Activated naive CD4-positive, alpha-beta T cell treated with anti-CD3 and anti-CD28 coated beads for 36 hours (primary cell): ENCODE measurements at regions of chr17 and their contacts with region 1.

Region 1: DNA sequence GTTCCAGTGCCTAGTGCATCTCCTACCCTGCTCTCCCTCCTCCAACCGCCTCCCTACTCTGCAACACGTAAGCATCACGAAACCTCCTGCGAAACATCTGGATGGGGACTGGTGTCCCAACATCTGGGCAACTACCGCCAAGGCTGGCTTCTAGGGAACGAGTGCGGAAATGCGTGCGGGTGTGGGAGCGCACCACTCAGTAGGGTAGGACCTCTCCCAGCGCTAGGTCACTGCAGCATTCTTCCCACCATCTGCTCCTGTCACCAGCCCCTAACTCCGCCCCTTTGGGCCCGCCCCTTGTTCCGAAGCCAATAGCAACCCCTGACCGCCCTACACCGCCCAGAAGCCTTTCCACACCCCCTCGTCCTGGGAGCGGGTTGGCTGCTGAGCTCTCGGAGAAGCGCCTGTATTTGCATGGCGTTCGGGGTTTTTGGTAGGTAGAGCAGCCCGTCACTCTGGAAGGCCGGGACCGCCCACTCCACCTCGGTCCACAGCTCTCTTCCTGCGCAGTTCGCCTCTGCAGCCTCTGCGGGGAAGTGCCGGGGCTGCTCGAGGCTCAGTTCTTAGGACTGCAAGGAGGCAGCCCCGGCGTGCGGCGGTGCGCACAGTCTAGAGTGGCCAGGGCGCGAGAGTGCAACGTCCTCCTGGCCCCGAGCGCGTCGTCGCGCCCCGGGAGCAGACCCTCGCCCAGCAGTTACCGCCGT is at the start of gene HS3ST3B1:
- DNase-seq: peak; percentile 100
- H3K4me3 Mint-ChIP-seq: peak within 1 kb of the TSS; percentile 89
- H3K27ac Mint-ChIP-seq: peak within 1 kb of the TSS; percentile 95
- H3K4me1 Mint-ChIP-seq: peaks cover 38% of the 10 kb centered on the region
- H3K27me3 Mint-ChIP-seq: peaks cover 30% of the 10 kb centered on the region
- total RNA-seq, gene HS3ST3B1: 23.2 to 26.0 TPM

Region 2: DNA sequence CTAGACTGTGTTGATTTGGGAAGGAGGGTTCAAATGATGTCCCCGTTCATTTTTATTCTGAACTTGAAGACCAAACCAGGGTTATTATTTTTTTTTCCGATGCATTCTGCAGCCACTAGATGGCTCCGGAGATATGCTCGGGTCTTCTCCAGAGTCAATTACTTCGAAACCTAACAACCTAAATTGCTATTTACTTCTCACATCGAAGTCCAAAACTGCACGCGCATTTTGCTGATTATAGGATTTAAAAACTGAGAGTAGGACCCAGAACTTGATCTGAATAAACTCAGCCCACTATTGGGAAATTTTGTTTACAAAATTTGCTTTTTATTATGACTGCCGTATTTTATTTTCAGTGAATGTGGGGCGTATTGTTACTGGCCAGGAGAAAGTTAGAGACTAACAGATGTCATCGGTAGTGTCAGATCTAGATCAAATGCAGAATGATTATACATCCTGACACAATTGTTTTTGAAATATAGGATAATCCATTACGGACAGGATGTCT is 962.8 kb before region 1 on chr17:
- CTCF ChIA-PET with region 1: no interaction called
- intact Hi-C with region 1: loop called (anchors 5 kb)
- DNase-seq: peak; percentile 43
- H3K4me3 Mint-ChIP-seq: peak overlapping the region; percentile 8
- H3K27ac Mint-ChIP-seq: no peak overlapping the region
- H3K4me1 Mint-ChIP-seq: peaks cover 6% of the 10 kb centered on the region
- H3K27me3 Mint-ChIP-seq: peaks cover 34% of the 10 kb centered on the region

Region 3: DNA sequence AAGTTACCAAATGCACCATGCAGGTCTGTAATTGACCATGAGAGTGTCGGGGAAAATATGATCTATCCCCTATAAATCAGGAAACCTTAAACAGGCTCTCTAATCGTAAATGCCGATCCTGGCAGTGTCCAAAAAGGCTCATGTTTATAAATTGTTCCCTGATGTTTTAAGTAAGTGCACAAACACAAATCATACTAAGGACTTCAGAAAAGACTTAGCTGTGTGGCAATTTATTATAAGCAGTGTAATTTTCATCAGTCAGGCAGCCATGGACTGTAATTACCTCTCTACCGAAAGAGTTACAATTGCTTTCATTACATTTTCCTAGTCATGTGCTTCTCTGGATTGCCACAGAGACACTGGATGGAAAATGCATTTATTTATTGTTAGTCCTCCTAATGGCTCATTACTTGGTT is 304.9 kb before region 1 on chr17:
- CTCF ChIA-PET with region 1: no interaction called
- intact Hi-C with region 1: loop called (anchors 5 kb)
- DNase-seq: no peak
- H3K4me3 Mint-ChIP-seq: no peak overlapping the region
- H3K27ac Mint-ChIP-seq: no peak overlapping the region
- H3K4me1 Mint-ChIP-seq: no peaks in the 10 kb centered on the region
- H3K27me3 Mint-ChIP-seq: no peaks in the 10 kb centered on the region

Region 4: GRCh38 chr17:14118951-14119350 is 181.8 kb before region 1 on chr17:
- CTCF ChIA-PET with region 1: interaction called, 3 read pairs
- intact Hi-C with region 1: loop called (anchors 1 kb)
- DNase-seq: peak; percentile 37
- H3K4me3 Mint-ChIP-seq: no peak overlapping the region
- H3K27ac Mint-ChIP-seq: peak overlapping the region; percentile 96
- H3K4me1 Mint-ChIP-seq: peaks cover 88% of the 10 kb centered on the region
- H3K27me3 Mint-ChIP-seq: no peaks in the 10 kb centered on the region

Region 5: DNA sequence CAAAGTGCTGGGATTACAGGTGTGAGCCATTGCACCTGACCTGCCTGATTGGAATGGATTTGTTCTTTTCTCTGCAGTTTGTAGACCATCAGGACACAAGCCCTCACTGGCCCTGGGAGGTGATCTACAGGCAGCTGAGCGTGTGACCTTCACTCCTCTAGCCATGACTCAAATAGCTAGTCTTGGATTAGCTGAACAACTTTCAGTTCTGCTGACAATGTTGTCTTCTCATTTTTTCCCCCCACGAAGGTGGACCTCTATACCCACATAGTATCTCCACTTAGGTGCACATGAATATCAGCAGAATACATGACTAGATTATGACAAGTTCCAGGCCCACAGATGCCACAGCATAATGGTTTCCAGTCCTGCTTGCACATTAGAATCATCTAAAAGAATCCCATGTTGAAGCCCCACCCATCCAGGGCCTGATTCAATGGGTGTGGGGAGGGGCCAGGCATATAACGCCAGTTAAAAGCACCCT is 36.9 kb after region 1 on chr17:
- CTCF ChIA-PET with region 1: no interaction called
- intact Hi-C with region 1: loop called (anchors 1 kb)
- DNase-seq: peak; percentile 77
- H3K4me3 Mint-ChIP-seq: no peak overlapping the region
- H3K27ac Mint-ChIP-seq: peak overlapping the region; percentile 46
- H3K4me1 Mint-ChIP-seq: peaks cover 79% of the 10 kb centered on the region
- H3K27me3 Mint-ChIP-seq: no peaks in the 10 kb centered on the region

Region 6: DNA sequence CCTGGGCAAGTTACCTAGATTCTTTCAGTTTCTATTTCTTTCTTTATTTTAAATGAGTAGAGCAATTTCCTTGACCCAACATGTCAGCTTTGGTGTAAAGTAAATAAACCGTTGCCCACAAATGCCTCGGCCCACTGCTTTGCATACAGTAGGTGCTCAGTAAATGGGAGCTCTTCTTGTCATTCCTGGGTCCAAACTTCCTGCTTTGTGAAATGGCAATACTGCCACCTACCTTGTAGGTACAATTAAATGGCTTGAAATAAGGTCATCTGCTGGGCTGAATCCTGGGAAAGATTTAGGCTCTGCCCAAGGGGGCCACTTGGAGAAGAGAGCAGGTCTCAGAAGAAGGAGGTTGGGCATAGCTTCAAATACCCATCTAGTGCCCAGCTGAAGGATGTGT is 253.1 kb after region 1 on chr17:
- CTCF ChIA-PET with region 1: no interaction called
- intact Hi-C with region 1: loop called (anchors 5 kb)
- DNase-seq: no peak
- H3K4me3 Mint-ChIP-seq: no peak overlapping the region
- H3K27ac Mint-ChIP-seq: no peak overlapping the region
- H3K4me1 Mint-ChIP-seq: no peaks in the 10 kb centered on the region
- H3K27me3 Mint-ChIP-seq: no peaks in the 10 kb centered on the region

Region 7: GRCh38 chr17:14630046-14630445 is 329.3 kb after region 1 on chr17:
- CTCF ChIA-PET with region 1: no interaction called
- intact Hi-C with region 1: no loop called
- DNase-seq: no peak
- H3K4me3 Mint-ChIP-seq: no peak overlapping the region
- H3K27ac Mint-ChIP-seq: no peak overlapping the region
- H3K4me1 Mint-ChIP-seq: no peaks in the 10 kb centered on the region
- H3K27me3 Mint-ChIP-seq: no peaks in the 10 kb centered on the region